ENCODE measurements at regions of chr9 and their contacts with region 1.

Region 1: GRCh38 chr9:3181049-3181953 is 337.4 kb upstream of the PUM3 start:
- DNase-seq: peak; percentile 39 to 87
- H3K4me3 ChIP-seq: peak overlapping the region; percentile 28 to 42 (median 35)
- H3K27ac ChIP-seq: no peak overlapping the region
- H3K4me1 ChIP-seq: peaks cover 0 to 21% (median 11%) of the 10 kb centered on the region in 4 donors
- H3K27me3 ChIP-seq: peaks cover 0 to 46% (median 20%) of the 10 kb centered on the region in 3 donors
- CTCF ChIP-seq: peak in 2 of 7 experiments; percentile 20 to 34
- EP300 ChIP-seq: no peak
- POLR2A ChIP-seq: no peak

Region 2: GRCh38 chr9:2872257-2872935 is 308.9 kb before region 1 on chr9:
- intact Hi-C with region 1: loop called (anchors 10 kb)
- DNase-seq: peak in 1 of 2 donors; percentile 75
- H3K4me3 ChIP-seq: no peak overlapping the region
- H3K27ac ChIP-seq: no peak overlapping the region
- H3K4me1 ChIP-seq: no peaks in the 10 kb centered on the region
- H3K27me3 ChIP-seq: peaks cover 0 to 41% (median 0%) of the 10 kb centered on the region in 3 donors
- CTCF ChIP-seq: no peak
- EP300 ChIP-seq: no peak
- POLR2A ChIP-seq: no peak